ENCODE measurements at regions of chr11 and their contacts with region 1.

Region 1: GRCh38 chr11:122309262-122309925 is 193.4 kb upstream of the BLID start:
- DNase-seq: no peak
- ATAC-seq: no peak
- H3K4me3 ChIP-seq: no peak overlapping the region
- H3K27ac ChIP-seq: no peak overlapping the region
- H3K4me1 ChIP-seq: no peaks in the 10 kb centered on the region
- H3K27me3 ChIP-seq: peaks cover 100% of the 10 kb centered on the region
- CTCF ChIP-seq: no peak

Region 2: DNA sequence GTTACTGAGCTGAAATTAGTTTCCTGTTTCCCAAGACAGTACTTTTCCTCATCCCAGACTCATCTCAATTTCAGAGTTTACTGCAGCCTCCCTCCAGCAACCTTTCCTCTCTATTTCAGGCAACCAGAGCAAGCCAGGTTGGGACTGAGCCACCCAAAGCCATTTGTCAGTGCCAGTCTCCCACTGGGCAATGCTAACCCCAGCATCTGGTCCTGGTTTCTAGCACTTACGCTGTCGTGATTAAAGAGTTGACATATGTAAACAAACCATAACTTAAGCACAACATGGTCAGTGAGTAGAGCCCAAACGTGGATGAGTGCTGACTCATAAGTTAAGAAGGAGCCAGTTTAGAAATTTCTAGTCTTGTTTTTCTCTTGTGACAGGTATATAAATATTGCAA is 73.8 kb before region 1 on chr11:
- CTCF ChIA-PET with region 1: no interaction called
- POLR2A ChIA-PET with region 1: no interaction called
- intact Hi-C with region 1: no loop called
- DNase-seq: peak; percentile 74
- ATAC-seq: peak; percentile 83
- H3K4me3 ChIP-seq: no peak overlapping the region
- H3K27ac ChIP-seq: no peak overlapping the region
- H3K4me1 ChIP-seq: 0 out of 2 replicates have a peak, but pooled peaks cover 4% of the 10 kb centered on the region
- H3K27me3 ChIP-seq: peaks cover 14% of the 10 kb centered on the region
- CTCF ChIP-seq: no peak

Region 3: DNA sequence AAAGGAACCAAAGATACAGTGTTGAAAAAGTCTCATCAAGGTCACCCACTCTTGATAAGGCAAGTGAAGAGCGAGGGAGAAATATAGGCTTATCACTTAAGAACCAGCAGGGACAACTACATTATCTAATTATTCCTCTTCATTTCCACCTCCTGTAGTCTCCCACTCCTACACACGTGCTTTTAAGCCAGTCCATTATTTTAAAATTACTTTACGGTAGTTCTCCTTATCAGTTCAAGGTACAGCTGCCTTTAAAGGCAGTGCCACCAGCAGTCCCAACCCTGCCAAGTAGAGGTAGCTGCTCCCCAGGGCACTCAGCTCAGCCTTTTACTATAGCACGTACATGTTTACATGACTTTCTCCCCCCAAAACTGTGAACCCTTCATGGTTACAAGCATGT is 31.9 kb before region 1 on chr11:
- CTCF ChIA-PET with region 1: no interaction called
- POLR2A ChIA-PET with region 1: no interaction called
- intact Hi-C with region 1: no loop called
- DNase-seq: no peak
- ATAC-seq: no peak
- H3K4me3 ChIP-seq: no peak overlapping the region
- H3K27ac ChIP-seq: no peak overlapping the region
- H3K4me1 ChIP-seq: no peaks in the 10 kb centered on the region
- H3K27me3 ChIP-seq: peaks cover 75% of the 10 kb centered on the region
- CTCF ChIP-seq: no peak

Region 4: DNA sequence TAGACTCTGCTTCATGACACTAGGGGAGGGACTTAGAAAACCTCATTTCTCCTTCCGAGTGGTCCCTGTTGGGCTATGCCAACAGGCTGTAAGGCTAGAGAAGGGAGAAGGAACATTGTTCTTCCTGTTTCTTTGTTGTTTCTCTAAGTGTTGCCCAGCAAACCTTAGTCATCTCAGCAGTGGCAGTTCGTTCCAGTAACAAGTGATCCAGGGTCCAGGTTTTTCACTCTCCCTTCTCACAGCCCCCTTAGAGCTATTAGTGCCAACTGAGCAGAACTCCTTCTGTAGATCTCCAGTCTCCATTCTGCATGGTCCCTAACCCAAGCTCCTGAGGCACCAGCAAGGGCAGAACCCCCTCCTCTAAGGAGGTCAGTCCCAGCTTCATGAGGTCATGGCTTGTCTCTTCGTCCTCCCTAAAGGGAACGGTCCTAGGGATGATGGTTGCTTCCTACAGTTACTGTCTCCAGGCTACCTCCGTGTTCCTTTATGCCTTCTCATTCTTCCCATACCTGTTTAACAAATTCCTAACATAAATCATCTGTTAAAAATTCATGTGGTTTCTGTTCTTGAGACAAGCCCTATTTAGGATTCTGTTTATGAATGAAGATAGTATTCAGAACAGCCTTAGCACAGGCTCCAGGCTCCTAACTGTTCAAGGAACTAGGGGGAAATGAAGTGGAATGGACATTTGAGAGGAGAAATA is 177.6 kb after region 1 on chr11:
- CTCF ChIA-PET with region 1: no interaction called
- POLR2A ChIA-PET with region 1: no interaction called
- intact Hi-C with region 1: loop called (anchors 10 kb)
- DNase-seq: peak; percentile 35
- ATAC-seq: no peak
- H3K4me3 ChIP-seq: no peak overlapping the region
- H3K27ac ChIP-seq: no peak overlapping the region
- H3K4me1 ChIP-seq: no peaks in the 10 kb centered on the region
- H3K27me3 ChIP-seq: peaks cover 72% of the 10 kb centered on the region
- CTCF ChIP-seq: no peak